Caco-2 (cell line): ENCODE measurements at regions of chr12 and their contacts with region 1.

Region 1: DNA sequence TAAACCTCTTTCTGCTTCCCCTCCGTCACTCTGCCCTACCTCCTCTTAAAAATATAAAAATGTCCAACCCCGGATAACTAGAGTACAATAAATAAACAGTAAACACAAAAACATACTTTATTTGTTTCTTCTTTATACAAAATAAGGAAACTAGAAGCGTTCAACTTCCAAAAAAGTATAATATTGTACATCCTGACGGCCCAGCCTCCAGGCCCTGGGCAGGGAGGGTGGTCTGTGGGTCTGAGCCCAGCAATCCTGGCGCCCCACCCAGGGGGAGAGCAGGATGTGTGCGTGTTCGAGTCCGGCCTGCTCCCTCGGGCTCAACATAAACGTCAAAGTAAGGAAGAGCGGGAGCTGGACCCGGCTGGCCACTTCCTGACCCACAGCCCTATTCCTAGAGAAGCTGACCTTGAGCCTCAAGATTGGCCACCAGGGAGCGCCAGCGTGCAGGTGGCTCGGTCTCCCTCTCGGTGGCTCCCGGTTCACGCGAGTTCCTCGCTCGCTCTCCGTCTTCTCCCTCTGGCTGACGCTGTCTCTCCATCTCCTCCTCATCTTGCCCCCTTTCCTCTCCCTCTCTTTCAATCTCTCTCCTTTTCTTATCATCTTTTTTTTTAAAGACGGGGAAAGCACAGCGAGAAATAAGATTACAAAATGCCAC is 9.4 kb downstream of the LHX5 start:
- DNase-seq: peak; percentile 74 to 82
- H3K4me3 ChIP-seq: no peak overlapping the region
- H3K4me3 Mint-ChIP-seq: no peak overlapping the region
- H3K27ac Mint-ChIP-seq: no peak overlapping the region
- H3K4me1 ChIP-seq: peaks cover 11% of the 10 kb centered on the region; the same call in 1 of the 2 replicates
- H3K4me1 Mint-ChIP-seq: peaks cover 9% of the 10 kb centered on the region
- H3K27me3 ChIP-seq: peaks cover 3% of the 10 kb centered on the region
- H3K27me3 Mint-ChIP-seq: peaks cover 33% of the 10 kb centered on the region
- CTCF ChIP-seq: peak; percentile 77 to 84

Region 2: DNA sequence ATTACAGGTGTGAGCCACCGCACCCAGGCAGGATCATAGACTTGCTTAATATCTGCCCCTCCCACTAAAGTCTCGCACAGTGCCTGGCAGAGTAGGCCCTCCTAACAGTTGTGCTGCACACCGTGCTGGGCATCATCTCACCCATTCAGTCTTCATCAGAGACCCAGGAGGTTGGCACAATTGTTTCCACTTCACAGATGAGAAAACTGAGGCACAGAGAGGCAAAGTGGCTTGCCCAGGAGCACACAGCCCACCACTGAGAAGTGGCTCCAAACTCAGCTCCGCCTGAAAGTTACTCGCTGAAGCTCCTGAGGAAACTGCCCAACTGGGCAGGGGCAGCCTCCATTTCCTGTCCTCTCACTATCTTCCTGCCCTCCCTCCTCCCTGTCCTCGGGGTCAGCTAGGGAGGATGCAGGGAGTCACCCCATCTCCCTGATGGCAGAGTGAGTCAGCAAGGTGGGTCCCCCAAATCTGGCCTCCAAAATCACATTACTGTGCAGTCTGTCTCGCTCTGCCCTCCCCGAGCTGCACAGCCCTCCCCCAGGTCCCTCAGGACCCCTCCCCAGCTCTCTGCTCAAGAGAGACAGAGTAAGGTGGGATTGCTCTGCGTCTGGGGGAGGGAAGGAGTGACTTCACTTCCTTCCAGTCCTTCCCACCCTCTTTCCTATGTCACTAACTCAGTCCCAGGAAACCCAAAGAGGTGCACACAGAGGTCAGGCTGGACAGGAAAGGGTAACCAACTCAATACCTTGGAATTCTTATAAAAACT is 133.0 kb before region 1 on chr12:
- CTCF ChIA-PET with region 1: no interaction called
- POLR2A ChIA-PET with region 1: no interaction called
- intact Hi-C with region 1: no loop called
- DNase-seq: no peak
- H3K4me3 ChIP-seq: no peak overlapping the region
- H3K4me3 Mint-ChIP-seq: no peak overlapping the region
- H3K27ac Mint-ChIP-seq: no peak overlapping the region
- H3K4me1 ChIP-seq: peaks cover 5% of the 10 kb centered on the region; the same call in 1 of the 2 replicates
- H3K4me1 Mint-ChIP-seq: no peaks in the 10 kb centered on the region
- H3K27me3 ChIP-seq: no peaks in the 10 kb centered on the region
- H3K27me3 Mint-ChIP-seq: no peaks in the 10 kb centered on the region
- CTCF ChIP-seq: no peak

Region 3: DNA sequence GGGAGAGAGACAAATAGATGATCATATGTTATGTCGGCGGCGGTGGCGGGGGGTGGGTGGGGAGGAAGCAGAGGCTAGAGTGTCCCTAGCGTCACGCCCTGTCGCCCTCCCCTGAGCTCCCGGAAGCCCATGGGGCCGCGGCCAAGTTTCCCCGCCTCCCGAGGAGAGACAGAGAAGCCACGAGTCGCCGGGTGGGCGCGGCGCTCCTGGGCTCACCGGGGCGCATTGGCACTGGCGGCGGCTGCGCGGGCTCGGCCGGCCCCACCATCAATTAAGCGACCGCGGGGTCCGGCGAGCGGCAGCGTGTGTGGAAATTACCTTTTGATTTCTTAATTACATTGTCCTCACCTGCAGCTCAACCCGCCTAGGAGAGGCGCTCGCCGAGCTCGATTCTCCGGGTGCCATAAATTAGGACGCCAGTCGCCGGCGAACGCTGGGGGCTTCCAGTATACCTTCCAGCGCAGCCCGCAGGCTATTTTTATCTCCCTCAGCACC is 129.3 kb after region 1 on chr12:
- CTCF ChIA-PET with region 1: no interaction called
- POLR2A ChIA-PET with region 1: no interaction called
- intact Hi-C with region 1: loop called (anchors 10 kb)
- DNase-seq: peak; percentile 64 to 71
- H3K4me3 ChIP-seq: peak overlapping the region; percentile 41
- H3K4me3 Mint-ChIP-seq: peak overlapping the region; percentile 84
- H3K27ac Mint-ChIP-seq: no peak overlapping the region
- H3K4me1 ChIP-seq: no peaks in the 10 kb centered on the region; the same call in 1 of the 2 replicates
- H3K4me1 Mint-ChIP-seq: no peaks in the 10 kb centered on the region
- H3K27me3 ChIP-seq: no peaks in the 10 kb centered on the region; the same call in 1 of the 2 replicates
- H3K27me3 Mint-ChIP-seq: peaks cover 14% of the 10 kb centered on the region
- CTCF ChIP-seq: no peak

Region 4: GRCh38 chr12:113678223-113679119 is 216.2 kb after region 1 on chr12:
- CTCF ChIA-PET with region 1: no interaction called
- POLR2A ChIA-PET with region 1: no interaction called
- intact Hi-C with region 1: no loop called
- DNase-seq: no peak
- H3K4me3 ChIP-seq: no peak overlapping the region
- H3K4me3 Mint-ChIP-seq: no peak overlapping the region
- H3K27ac Mint-ChIP-seq: no peak overlapping the region
- H3K4me1 ChIP-seq: no peaks in the 10 kb centered on the region
- H3K4me1 Mint-ChIP-seq: no peaks in the 10 kb centered on the region
- H3K27me3 ChIP-seq: no peaks in the 10 kb centered on the region; the same call in 1 of the 2 replicates
- H3K27me3 Mint-ChIP-seq: peaks cover 10% of the 10 kb centered on the region
- CTCF ChIP-seq: no peak

Region 5: GRCh38 chr12:113727651-113728061 is 265.4 kb after region 1 on chr12:
- CTCF ChIA-PET with region 1: no interaction called
- POLR2A ChIA-PET with region 1: no interaction called
- intact Hi-C with region 1: loop called (anchors 5 kb)
- DNase-seq: peak; percentile 66 to 69
- H3K4me3 ChIP-seq: no peak overlapping the region
- H3K4me3 Mint-ChIP-seq: peak overlapping the region; percentile 35
- H3K27ac Mint-ChIP-seq: peak overlapping the region; percentile 69
- H3K4me1 ChIP-seq: peaks cover 16% of the 10 kb centered on the region
- H3K4me1 Mint-ChIP-seq: peaks cover 24% of the 10 kb centered on the region
- H3K27me3 ChIP-seq: no peaks in the 10 kb centered on the region
- H3K27me3 Mint-ChIP-seq: no peaks in the 10 kb centered on the region
- CTCF ChIP-seq: no peak

Region 6: GRCh38 chr12:113766879-113767878 is 304.9 kb after region 1 on chr12:
- CTCF ChIA-PET with region 1: interaction called, 4 read pairs
- POLR2A ChIA-PET with region 1: no interaction called
- intact Hi-C with region 1: loop called (anchors 1 kb)
- DNase-seq: peak; percentile 52 to 71
- H3K4me3 ChIP-seq: no peak overlapping the region
- H3K4me3 Mint-ChIP-seq: no peak overlapping the region
- H3K27ac Mint-ChIP-seq: peak overlapping the region; percentile 20
- H3K4me1 ChIP-seq: peaks cover 32% of the 10 kb centered on the region
- H3K4me1 Mint-ChIP-seq: peaks cover 21% of the 10 kb centered on the region
- H3K27me3 ChIP-seq: no peaks in the 10 kb centered on the region
- H3K27me3 Mint-ChIP-seq: no peaks in the 10 kb centered on the region
- CTCF ChIP-seq: no peak

Region 7: GRCh38 chr12:113912760-113913329 is 450.6 kb after region 1 on chr12:
- CTCF ChIA-PET with region 1: interaction called, 4 read pairs
- POLR2A ChIA-PET with region 1: no interaction called
- intact Hi-C with region 1: loop called (anchors 1 kb)
- DNase-seq: peak; percentile 68 to 75
- H3K4me3 ChIP-seq: no peak overlapping the region
- H3K4me3 Mint-ChIP-seq: no peak overlapping the region
- H3K27ac Mint-ChIP-seq: no peak overlapping the region
- H3K4me1 ChIP-seq: no peaks in the 10 kb centered on the region
- H3K4me1 Mint-ChIP-seq: no peaks in the 10 kb centered on the region
- H3K27me3 ChIP-seq: no peaks in the 10 kb centered on the region
- H3K27me3 Mint-ChIP-seq: no peaks in the 10 kb centered on the region
- CTCF ChIP-seq: peak; percentile 90 to 93